ENCODE measurements at regions of chr17 and their contacts with region 1.

Region 1: DNA sequence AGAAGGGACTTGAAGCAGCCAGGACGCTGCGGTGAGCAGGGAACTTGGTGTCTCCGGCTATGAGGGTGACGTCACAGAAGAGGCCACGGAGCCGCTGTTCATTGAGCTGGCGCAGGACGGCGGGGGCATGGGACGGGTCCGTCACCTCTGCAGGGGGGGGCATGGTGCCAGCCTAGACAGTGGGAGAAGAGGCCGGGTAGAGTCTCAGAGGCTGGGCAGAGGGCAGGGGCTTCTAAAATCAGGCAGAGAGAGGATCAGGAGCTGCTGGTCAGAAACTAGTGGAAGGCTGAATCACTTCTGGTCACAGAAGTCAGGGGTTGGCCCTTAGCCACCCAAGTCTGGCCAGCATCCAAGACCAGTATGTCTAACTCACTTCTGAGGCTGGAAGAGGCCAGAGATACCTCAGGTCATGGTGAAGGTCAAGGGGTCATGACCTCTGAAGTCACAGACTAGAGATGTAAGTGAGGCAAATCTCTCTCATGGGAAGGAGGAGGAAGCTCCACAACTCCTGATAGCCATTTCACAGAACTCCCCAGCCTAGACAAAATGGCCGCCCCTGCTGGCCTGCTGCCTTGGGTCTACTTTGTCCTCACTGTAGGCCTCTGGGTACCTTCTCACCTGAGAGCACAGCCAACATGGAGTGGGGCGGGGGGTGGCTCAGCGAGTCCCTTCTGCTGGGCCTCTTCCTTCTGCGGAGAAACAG is 12.6 kb downstream of the ZBTB4 start:
- DNase-seq: no peak
- H3K4me3 Mint-ChIP-seq: no peak overlapping the region
- H3K27ac Mint-ChIP-seq: peak overlapping the region; percentile 31
- H3K4me1 Mint-ChIP-seq: peaks cover under 1% of the 10 kb centered on the region
- H3K27me3 Mint-ChIP-seq: no peaks in the 10 kb centered on the region
- CTCF ChIP-seq: no peak

Region 2: GRCh38 chr17:7078711-7079110 is 388.1 kb before region 1 on chr17:
- CTCF ChIA-PET with region 1: no interaction called
- POLR2A ChIA-PET with region 1: no interaction called
- intact Hi-C with region 1: no loop called
- DNase-seq: no peak
- H3K4me3 Mint-ChIP-seq: no peak overlapping the region
- H3K27ac Mint-ChIP-seq: no peak overlapping the region
- H3K4me1 Mint-ChIP-seq: peaks cover 5% of the 10 kb centered on the region
- H3K27me3 Mint-ChIP-seq: no peaks in the 10 kb centered on the region
- CTCF ChIP-seq: no peak

Region 3: GRCh38 chr17:7354262-7354843 is 112.4 kb before region 1 on chr17:
- CTCF ChIA-PET with region 1: no interaction called
- POLR2A ChIA-PET with region 1: no interaction called
- intact Hi-C with region 1: no loop called
- DNase-seq: peak; percentile 91
- H3K4me3 Mint-ChIP-seq: peak overlapping the region; percentile 85
- H3K27ac Mint-ChIP-seq: peak overlapping the region; percentile 93
- H3K4me1 Mint-ChIP-seq: peaks cover 17% of the 10 kb centered on the region
- H3K27me3 Mint-ChIP-seq: no peaks in the 10 kb centered on the region
- CTCF ChIP-seq: no peak

Region 4: GRCh38 chr17:7478276-7479153 is 11.7 kb after region 1 on chr17:
- CTCF ChIA-PET with region 1: interaction called, 3 read pairs
- POLR2A ChIA-PET with region 1: interaction called, 18 read pairs
- intact Hi-C with region 1: no loop called
- DNase-seq: no peak
- H3K4me3 Mint-ChIP-seq: peak overlapping the region; percentile 84
- H3K27ac Mint-ChIP-seq: peak overlapping the region; percentile 20
- H3K4me1 Mint-ChIP-seq: peaks cover 43% of the 10 kb centered on the region
- H3K27me3 Mint-ChIP-seq: no peaks in the 10 kb centered on the region
- CTCF ChIP-seq: no peak

Measured in MCF 10A (cell line).